Activated T-helper 1 cell treated with anti-CD3 and anti-CD28 coated beads, Interleukin-12 subunit alpha, Interleukin-12 subunit beta, Interleukin-2, Interleukin-4 antibody, amounts not matched to agents 30 ng/mL and 10 ng/mL and 1 ng/mL, durations not matched to agents 14 hours and 24 hours and 36 hours (primary cell): ENCODE measurements at regions of chr7 and their contacts with region 1.

Region 1: DNA sequence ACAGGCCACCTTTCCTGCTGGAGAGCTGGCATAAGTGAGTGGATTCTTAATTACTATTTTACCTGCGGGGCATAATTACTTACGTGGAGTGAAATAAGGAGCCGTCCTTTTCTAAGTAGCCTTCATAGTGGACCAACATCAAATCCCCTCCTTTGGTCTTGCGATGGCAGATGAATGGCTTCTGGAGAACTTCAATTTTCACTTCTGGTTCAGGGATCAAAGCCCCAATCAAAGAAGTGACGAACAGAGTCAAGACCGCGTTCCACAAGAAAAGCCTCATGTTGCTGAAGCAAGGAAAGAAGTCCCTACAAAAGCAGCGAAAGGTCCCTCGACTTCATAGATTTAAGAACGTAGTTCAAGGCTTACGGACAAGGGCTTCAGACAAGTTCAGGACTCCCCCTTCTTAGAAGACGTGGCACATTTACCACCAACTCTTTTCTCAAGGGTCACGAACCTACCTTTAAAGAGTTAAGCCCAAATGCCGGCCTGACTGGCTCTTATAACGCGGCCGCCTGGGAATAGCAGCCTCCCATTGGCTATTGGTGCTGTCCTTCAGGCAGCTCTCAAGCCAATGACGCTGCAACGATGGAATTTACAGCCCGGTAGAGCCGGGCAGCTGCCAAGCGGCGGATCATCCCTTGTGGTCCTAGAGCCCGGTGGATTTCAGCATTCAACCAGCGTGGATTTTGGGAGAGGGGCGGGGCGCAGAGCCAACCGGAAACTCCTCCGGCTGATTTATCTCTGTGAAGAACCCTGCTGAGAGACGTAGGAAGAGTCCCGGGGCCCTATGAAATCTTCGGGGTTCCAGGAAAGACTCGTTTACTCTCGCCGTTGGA is at the start of gene FKBP14:
- DNase-seq: peak; percentile 91
- H3K4me3 Mint-ChIP-seq: no peak within 1 kb of the TSS
- H3K27ac Mint-ChIP-seq: peak within 1 kb of the TSS; percentile 89
- H3K4me1 Mint-ChIP-seq: peaks cover 44% of the 10 kb centered on the region
- H3K27me3 Mint-ChIP-seq: no peaks in the 10 kb centered on the region
- total RNA-seq, gene FKBP14: 8.4 and 10.6 TPM in 2 replicates

Region 2: GRCh38 chr7:29988424-29989256 is 37.8 kb before region 1 on chr7:
- intact Hi-C with region 1: loop called (anchors 2 kb)
- DNase-seq: no peak
- H3K4me3 Mint-ChIP-seq: peak overlapping the region; percentile 69
- H3K27ac Mint-ChIP-seq: no peak overlapping the region
- H3K4me1 Mint-ChIP-seq: no peaks in the 10 kb centered on the region
- H3K27me3 Mint-ChIP-seq: peaks cover 63% of the 10 kb centered on the region

Region 3: GRCh38 chr7:30134611-30135545 is 108.4 kb after region 1 on chr7 and contains the start of gene MTURN:
- intact Hi-C with region 1: loop called (anchors 1 kb)
- DNase-seq: peak; percentile 83
- H3K4me3 Mint-ChIP-seq: peak within 1 kb of the TSS; percentile 89
- H3K27ac Mint-ChIP-seq: peak within 1 kb of the TSS; percentile 80
- H3K4me1 Mint-ChIP-seq: peaks cover 6% of the 10 kb centered on the region
- H3K27me3 Mint-ChIP-seq: peaks cover 17% of the 10 kb centered on the region
- total RNA-seq, gene MTURN: 3.9 and 4.3 TPM in 2 replicates

Region 4: DNA sequence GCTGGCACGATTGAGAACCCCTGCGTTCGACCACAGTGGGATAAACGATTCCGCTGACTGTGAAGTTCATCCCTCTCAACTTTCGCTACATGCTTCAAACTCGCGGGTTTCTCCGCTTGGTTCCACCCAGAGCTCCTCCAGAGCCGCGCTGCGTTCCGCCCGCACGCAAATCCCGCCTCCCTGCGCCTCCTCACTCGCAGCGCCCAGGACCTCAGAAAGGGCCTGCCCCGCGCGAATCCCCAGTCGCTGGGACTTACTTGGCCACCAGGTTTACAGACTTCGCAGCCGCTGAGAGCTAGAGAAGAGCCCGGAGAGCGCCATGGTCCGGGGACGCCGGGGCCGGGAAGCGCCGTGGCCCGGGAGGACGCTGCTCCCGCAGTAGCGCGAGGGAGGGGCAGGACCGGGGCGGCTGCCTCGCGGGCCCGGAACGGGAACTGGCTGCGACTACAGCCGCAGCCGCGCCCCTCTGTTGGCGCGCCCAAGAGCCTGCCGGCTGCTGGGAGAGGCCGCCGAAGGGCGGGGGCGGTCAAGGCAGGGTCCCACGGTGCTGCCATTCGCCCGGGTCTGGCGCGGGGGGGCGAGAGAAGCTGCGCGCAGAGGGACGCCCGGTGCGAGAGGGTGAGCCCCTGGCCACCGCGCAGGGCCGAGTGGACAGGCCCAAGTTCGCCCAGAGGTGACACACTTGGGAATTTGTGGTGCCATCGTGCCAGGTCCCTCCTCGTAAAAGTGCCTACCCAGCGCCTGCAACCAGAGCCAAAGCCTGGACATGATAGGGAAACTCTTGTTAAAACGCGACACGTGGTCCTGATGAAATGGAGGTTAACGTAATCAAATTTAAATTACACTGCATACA is 452.1 kb after region 1 on chr7 and contains the start of gene NOD1:
- intact Hi-C with region 1: loop called (anchors 2 kb)
- DNase-seq: peak; percentile 71
- H3K4me3 Mint-ChIP-seq: peak within 1 kb of the TSS; percentile 90
- H3K27ac Mint-ChIP-seq: peak within 1 kb of the TSS; percentile 91
- H3K4me1 Mint-ChIP-seq: peaks cover 61% of the 10 kb centered on the region
- H3K27me3 Mint-ChIP-seq: no peaks in the 10 kb centered on the region
- total RNA-seq, gene NOD1: 9.1 and 13.1 TPM in 2 replicates

Region 5: GRCh38 chr7:30771174-30771879 is 744.9 kb after region 1 on chr7 and contains the start of gene MINDY4:
- intact Hi-C with region 1: loop called (anchors 5 kb)
- DNase-seq: peak; percentile 57
- H3K4me3 Mint-ChIP-seq: peak within 1 kb of the TSS; percentile 83
- H3K27ac Mint-ChIP-seq: peak within 1 kb of the TSS; percentile 77
- H3K4me1 Mint-ChIP-seq: peaks cover 12% of the 10 kb centered on the region
- H3K27me3 Mint-ChIP-seq: peaks cover 7% of the 10 kb centered on the region
- total RNA-seq, gene MINDY4: 0.96 and 2.2 TPM in 2 replicates